Endothelial cell of umbilical vein (primary cell): ENCODE measurements at regions of chr18 and their contacts with region 1.

Region 1: GRCh38 chr18:55509631-55510324 is 78.2 kb downstream of the TCF4 start:
- DNase-seq: peak; percentile 91
- H3K4me3 ChIP-seq: peak overlapping the region; percentile 13 to 55 (median 22)
- H3K27ac ChIP-seq: peak overlapping the region; percentile 96
- H3K4me1 ChIP-seq: peaks cover 60% of the 10 kb centered on the region
- H3K27me3 ChIP-seq: no peaks in the 10 kb centered on the region
- CTCF ChIP-seq: no peak
- POLR2A ChIP-seq: no peak

Region 2: GRCh38 chr18:55234366-55235093 is 275.2 kb before region 1 on chr18:
- CTCF ChIA-PET with region 1: no interaction called
- POLR2A ChIA-PET with region 1: no interaction called
- dilution Hi-C with region 1: no loop called
- intact Hi-C with region 1: loop called (anchors 5 kb)
- DNase-seq: peak; percentile 82
- H3K4me3 ChIP-seq: no peak overlapping the region
- H3K27ac ChIP-seq: peak overlapping the region; percentile 61
- H3K4me1 ChIP-seq: peaks cover 22% of the 10 kb centered on the region
- H3K27me3 ChIP-seq: no peaks in the 10 kb centered on the region
- CTCF ChIP-seq: peak; percentile 63 to 69
- POLR2A ChIP-seq: no peak

Region 3: GRCh38 chr18:55318951-55319441 is 190.8 kb before region 1 on chr18:
- CTCF ChIA-PET with region 1: no interaction called
- POLR2A ChIA-PET with region 1: no interaction called
- dilution Hi-C with region 1: no loop called
- intact Hi-C with region 1: no loop called
- DNase-seq: peak; percentile 81
- H3K4me3 ChIP-seq: peak overlapping the region in 1 of 3 experiments; percentile 89
- H3K27ac ChIP-seq: peak overlapping the region; percentile 52
- H3K4me1 ChIP-seq: peaks cover 62% of the 10 kb centered on the region
- H3K27me3 ChIP-seq: no peaks in the 10 kb centered on the region
- CTCF ChIP-seq: no peak
- POLR2A ChIP-seq: no peak

Region 4: GRCh38 chr18:55384551-55385275 is 125.1 kb before region 1 on chr18:
- CTCF ChIA-PET with region 1: interaction called, 4 read pairs
- POLR2A ChIA-PET with region 1: no interaction called
- dilution Hi-C with region 1: no loop called
- intact Hi-C with region 1: loop called (anchors 1 kb)
- DNase-seq: peak; percentile 67
- H3K4me3 ChIP-seq: no peak overlapping the region
- H3K27ac ChIP-seq: no peak overlapping the region
- H3K4me1 ChIP-seq: peaks cover 39% of the 10 kb centered on the region
- H3K27me3 ChIP-seq: no peaks in the 10 kb centered on the region
- CTCF ChIP-seq: peak; percentile 69 to 74
- POLR2A ChIP-seq: no peak

Region 5: DNA sequence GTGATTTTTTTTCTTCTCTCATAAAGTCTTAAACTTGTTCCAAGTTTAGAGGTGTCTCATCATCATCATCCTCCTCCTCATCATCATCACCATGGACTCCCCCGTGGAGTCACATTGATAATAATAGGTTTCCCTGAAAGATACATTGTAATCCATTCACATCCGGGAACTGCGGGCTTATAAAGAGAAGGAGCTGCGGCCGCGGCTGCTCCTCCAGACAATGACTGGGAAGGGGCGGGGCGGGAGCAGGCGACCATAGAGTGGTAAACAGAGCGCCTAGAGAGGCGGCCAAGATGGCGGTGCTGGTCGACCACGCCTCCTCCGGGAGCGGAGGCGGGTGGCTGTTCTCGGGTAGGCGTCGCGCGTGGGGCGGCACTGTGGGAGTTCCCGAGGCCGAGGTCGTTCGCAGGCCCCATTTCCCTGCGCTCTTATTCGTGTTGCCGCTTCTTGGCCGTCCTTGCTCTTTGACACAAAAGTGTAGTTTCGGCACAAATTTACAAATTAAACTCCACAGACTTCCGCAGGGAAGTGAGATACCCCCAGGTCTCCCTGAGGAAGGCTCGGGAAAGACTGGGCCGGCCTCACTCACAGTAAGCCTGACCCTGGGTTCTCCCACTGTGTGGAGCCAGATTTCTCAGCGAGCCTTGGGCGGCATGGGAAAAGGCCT is 80.0 kb after region 1 on chr18:
- CTCF ChIA-PET with region 1: interaction called, 3 read pairs
- POLR2A ChIA-PET with region 1: interaction called, 6 read pairs
- dilution Hi-C with region 1: no loop called
- intact Hi-C with region 1: loop called (anchors 1 kb)
- DNase-seq: peak; percentile 97
- H3K4me3 ChIP-seq: peak overlapping the region; percentile 87 to 100 (median 98)
- H3K27ac ChIP-seq: peak overlapping the region; percentile 96
- H3K4me1 ChIP-seq: peaks cover 23% of the 10 kb centered on the region
- H3K27me3 ChIP-seq: no peaks in the 10 kb centered on the region
- CTCF ChIP-seq: no peak
- POLR2A ChIP-seq: peak; percentile 81

Region 6: GRCh38 chr18:56021136-56021808 is 511.5 kb after region 1 on chr18:
- CTCF ChIA-PET with region 1: no interaction called
- POLR2A ChIA-PET with region 1: no interaction called
- dilution Hi-C with region 1: no loop called
- intact Hi-C with region 1: loop called (anchors 1 kb)
- DNase-seq: peak; percentile 86
- H3K4me3 ChIP-seq: peak overlapping the region in 1 of 3 experiments; percentile 3
- H3K27ac ChIP-seq: peak overlapping the region; percentile 93
- H3K4me1 ChIP-seq: peaks cover 35% of the 10 kb centered on the region
- H3K27me3 ChIP-seq: no peaks in the 10 kb centered on the region
- CTCF ChIP-seq: no peak
- POLR2A ChIP-seq: no peak

Region 7: GRCh38 chr18:56458770-56459712 is 949.3 kb after region 1 on chr18:
- CTCF ChIA-PET with region 1: no interaction called
- POLR2A ChIA-PET with region 1: no interaction called
- dilution Hi-C with region 1: no loop called
- intact Hi-C with region 1: loop called (anchors 1 kb)
- DNase-seq: peak; percentile 95
- H3K4me3 ChIP-seq: no peak overlapping the region
- H3K27ac ChIP-seq: peak overlapping the region; percentile 65
- H3K4me1 ChIP-seq: peaks cover 28% of the 10 kb centered on the region
- H3K27me3 ChIP-seq: no peaks in the 10 kb centered on the region
- CTCF ChIP-seq: no peak
- POLR2A ChIP-seq: no peak